ENCODE measurements at regions of chr18 and their contacts with region 1.

Region 1: GRCh38 chr18:9334329-9334972 is at the start of gene TWSG1:
- DNase-seq: peak; percentile 93 to 98
- H3K4me3 ChIP-seq: peak within 1 kb of the TSS; percentile 56
- H3K4me1 ChIP-seq: no peaks in the 10 kb centered on the region
- H3K27me3 ChIP-seq: no peaks in the 10 kb centered on the region

Region 2: GRCh38 chr18:9404565-9405060 is 70.2 kb after region 1 on chr18:
- in situ Hi-C with region 1: no loop called
- DNase-seq: no peak
- H3K4me3 ChIP-seq: no peak overlapping the region
- H3K4me1 ChIP-seq: no peaks in the 10 kb centered on the region
- H3K27me3 ChIP-seq: no peaks in the 10 kb centered on the region

Region 3: DNA sequence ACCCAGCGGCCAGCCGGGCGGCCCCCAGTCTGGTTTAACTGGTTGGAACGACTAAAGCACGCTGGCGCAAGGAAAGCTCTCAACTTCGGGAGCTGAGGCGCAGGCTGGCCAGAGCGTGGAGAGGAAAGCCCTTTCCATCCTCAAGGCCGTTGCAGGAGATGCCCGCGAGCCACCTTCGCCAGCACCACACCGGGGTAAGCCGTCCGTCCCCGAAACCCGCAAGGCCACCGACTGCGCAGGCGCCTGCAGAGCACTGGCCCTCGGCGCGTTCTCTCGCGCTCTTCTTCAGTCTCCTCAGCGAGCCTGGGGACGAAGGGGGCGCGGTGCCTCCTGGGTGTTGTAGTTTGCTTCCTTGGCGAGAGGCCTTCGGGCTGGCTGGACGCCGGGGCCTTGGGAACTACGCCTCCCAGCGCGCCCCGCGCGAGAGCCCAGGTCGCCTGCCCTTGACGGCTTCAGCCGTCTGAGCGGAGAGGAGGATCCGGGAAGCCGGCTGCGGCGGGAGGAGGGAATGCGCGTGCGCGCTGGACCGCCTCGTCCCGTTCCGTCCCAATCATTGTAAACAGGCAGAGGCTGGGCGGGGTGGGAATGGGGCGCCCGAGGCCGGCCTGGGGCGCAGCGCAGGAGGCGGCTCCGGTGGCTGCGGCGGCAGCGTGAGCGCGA is 140.7 kb after region 1 on chr18 and contains the start of gene RALBP1:
- in situ Hi-C with region 1: loop called (anchors 10 kb)
- DNase-seq: peak; percentile 98 to 99
- H3K4me3 ChIP-seq: peak within 1 kb of the TSS; percentile 65
- H3K4me1 ChIP-seq: peaks cover 5% of the 10 kb centered on the region
- H3K27me3 ChIP-seq: no peaks in the 10 kb centered on the region